ENCODE measurements at regions of chr5 and their contacts with region 1.

Region 1: DNA sequence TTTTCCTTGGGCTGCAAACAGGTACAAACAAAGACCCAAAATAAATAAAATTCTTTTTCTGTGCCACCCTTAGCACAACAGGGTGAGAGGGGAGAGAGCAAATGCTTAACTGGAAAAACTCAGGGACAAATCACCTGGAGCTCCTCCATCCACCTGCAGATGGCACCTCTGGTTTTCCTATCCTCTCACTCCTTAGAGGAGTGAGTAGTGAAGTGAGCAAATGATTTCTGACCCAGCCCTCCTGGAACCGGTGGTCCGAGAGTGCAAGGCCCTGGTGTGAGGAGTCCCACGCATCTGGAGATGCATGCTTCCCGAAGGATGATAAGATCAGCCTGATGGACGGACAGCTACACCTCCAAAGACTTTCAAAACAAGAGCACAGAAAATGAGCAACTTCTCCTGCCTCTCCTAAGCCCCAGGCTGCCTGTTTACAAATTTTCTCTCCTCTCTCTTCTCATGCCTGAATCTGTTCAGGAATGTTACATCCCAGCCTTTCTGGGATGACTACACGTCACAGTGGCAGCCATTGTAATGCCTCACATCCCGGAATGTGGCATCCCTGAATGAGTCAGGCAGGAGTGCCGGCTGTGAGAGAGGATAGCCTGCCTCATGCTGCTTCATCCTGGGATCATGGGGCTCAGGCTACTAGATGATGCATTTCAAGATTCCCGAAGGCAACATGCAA is 86.4 kb downstream of the ADRB2 start:
- DNase-seq: peak; percentile 99
- ATAC-seq: peak; percentile 80
- H3K4me3 ChIP-seq: no peak overlapping the region
- H3K27ac ChIP-seq: peak overlapping the region; percentile 86
- H3K4me1 ChIP-seq: peaks cover 47% of the 10 kb centered on the region
- H3K27me3 ChIP-seq: no peaks in the 10 kb centered on the region
- CTCF ChIP-seq: peak; percentile 35
- POLR2A ChIP-seq: peak; percentile 15; the same call in 1 of the 2 replicates
- RAD21 ChIP-seq: peak; percentile 37

Region 2: GRCh38 chr5:148740966-148741742 is 171.7 kb before region 1 on chr5:
- CTCF ChIA-PET with region 1: interaction called, 3 read pairs
- POLR2A ChIA-PET with region 1: no interaction called
- dilution Hi-C with region 1: no loop called
- in situ Hi-C with region 1: no loop called
- intact Hi-C with region 1: loop called (anchors 5 kb)
- DNase-seq: peak; percentile 85
- ATAC-seq: peak; percentile 95
- H3K4me3 ChIP-seq: no peak overlapping the region
- H3K27ac ChIP-seq: no peak overlapping the region
- H3K4me1 ChIP-seq: no peaks in the 10 kb centered on the region
- H3K27me3 ChIP-seq: no peaks in the 10 kb centered on the region
- CTCF ChIP-seq: peak; percentile 85
- POLR2A ChIP-seq: no peak
- RAD21 ChIP-seq: peak; percentile 77

Region 3: GRCh38 chr5:148826053-148826738 is 86.7 kb before region 1 on chr5 and contains the start of gene ADRB2:
- CTCF ChIA-PET with region 1: interaction called, 3 read pairs
- POLR2A ChIA-PET with region 1: no interaction called
- dilution Hi-C with region 1: no loop called
- in situ Hi-C with region 1: no loop called
- intact Hi-C with region 1: loop called (anchors 5 kb)
- DNase-seq: peak; percentile 91
- ATAC-seq: peak; percentile 98
- H3K4me3 ChIP-seq: peak within 1 kb of the TSS; percentile 67
- H3K27ac ChIP-seq: peak within 1 kb of the TSS; percentile 70
- H3K4me1 ChIP-seq: peaks cover 13% of the 10 kb centered on the region
- H3K27me3 ChIP-seq: no peaks in the 10 kb centered on the region
- CTCF ChIP-seq: no peak
- POLR2A ChIP-seq: peak; percentile 94
- RAD21 ChIP-seq: no peak
- total RNA-seq, gene ADRB2: 3.4 and 4.4 TPM in 2 replicates

Region 4: GRCh38 chr5:148839960-148840359 is 72.9 kb before region 1 on chr5:
- CTCF ChIA-PET with region 1: no interaction called
- POLR2A ChIA-PET with region 1: no interaction called
- dilution Hi-C with region 1: no loop called
- in situ Hi-C with region 1: no loop called
- intact Hi-C with region 1: no loop called
- DNase-seq: peak; percentile 20
- ATAC-seq: no peak
- H3K4me3 ChIP-seq: no peak overlapping the region
- H3K27ac ChIP-seq: no peak overlapping the region
- H3K4me1 ChIP-seq: peaks cover 9% of the 10 kb centered on the region; the same call in 1 of the 2 replicates
- H3K27me3 ChIP-seq: no peaks in the 10 kb centered on the region
- CTCF ChIP-seq: no peak
- POLR2A ChIP-seq: no peak
- RAD21 ChIP-seq: no peak

Region 5: DNA sequence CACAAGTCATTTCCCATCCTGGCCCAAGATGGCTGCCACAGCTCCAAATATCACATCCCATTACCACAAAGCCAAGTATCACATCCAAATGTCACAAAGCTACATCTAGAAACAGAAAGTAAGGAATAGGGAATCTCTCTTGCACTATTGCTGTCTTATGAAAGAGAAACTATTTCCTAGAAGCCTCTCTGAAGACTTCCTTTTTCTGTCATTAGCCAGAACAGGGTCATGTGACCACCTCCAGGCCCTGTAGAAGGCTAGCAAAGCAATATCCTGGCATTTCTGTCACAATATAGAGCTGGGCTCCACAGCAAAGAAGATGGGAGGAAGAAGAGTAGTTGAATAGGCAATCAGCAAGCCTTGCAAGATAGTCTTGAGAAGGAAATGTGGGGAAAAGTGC is 50.8 kb after region 1 on chr5:
- CTCF ChIA-PET with region 1: interaction called, 3 read pairs
- POLR2A ChIA-PET with region 1: no interaction called
- dilution Hi-C with region 1: no loop called
- in situ Hi-C with region 1: no loop called
- intact Hi-C with region 1: loop called (anchors 2 kb)
- DNase-seq: no peak
- ATAC-seq: no peak
- H3K4me3 ChIP-seq: no peak overlapping the region
- H3K27ac ChIP-seq: no peak overlapping the region
- H3K4me1 ChIP-seq: peaks cover 5% of the 10 kb centered on the region
- H3K27me3 ChIP-seq: no peaks in the 10 kb centered on the region
- CTCF ChIP-seq: no peak
- POLR2A ChIP-seq: no peak
- RAD21 ChIP-seq: no peak

Measured in IMR-90 (cell line).